Right lobe of liver (tissue), 6 donors: ENCODE measurements at regions of chr9 and their contacts with region 1.

Region 1: GRCh38 chr9:101530077-101530711 is 3.5 kb upstream of the RNF20 start:
- DNase-seq: peak in 2 of 3 donors; percentile 31 to 63
- ATAC-seq: peak; percentile 53 to 69 (median 62)
- H3K4me3 ChIP-seq: no peak overlapping the region
- H3K27ac ChIP-seq: no peak overlapping the region
- H3K4me1 ChIP-seq: peaks cover 0 to 7% (median 3%) of the 10 kb centered on the region in 4 donors
- H3K27me3 ChIP-seq: no peaks in the 10 kb centered on the region
- CTCF ChIP-seq: peak; percentile 79 to 92 (median 82)
- POLR2A ChIP-seq: no peak

Region 2: DNA sequence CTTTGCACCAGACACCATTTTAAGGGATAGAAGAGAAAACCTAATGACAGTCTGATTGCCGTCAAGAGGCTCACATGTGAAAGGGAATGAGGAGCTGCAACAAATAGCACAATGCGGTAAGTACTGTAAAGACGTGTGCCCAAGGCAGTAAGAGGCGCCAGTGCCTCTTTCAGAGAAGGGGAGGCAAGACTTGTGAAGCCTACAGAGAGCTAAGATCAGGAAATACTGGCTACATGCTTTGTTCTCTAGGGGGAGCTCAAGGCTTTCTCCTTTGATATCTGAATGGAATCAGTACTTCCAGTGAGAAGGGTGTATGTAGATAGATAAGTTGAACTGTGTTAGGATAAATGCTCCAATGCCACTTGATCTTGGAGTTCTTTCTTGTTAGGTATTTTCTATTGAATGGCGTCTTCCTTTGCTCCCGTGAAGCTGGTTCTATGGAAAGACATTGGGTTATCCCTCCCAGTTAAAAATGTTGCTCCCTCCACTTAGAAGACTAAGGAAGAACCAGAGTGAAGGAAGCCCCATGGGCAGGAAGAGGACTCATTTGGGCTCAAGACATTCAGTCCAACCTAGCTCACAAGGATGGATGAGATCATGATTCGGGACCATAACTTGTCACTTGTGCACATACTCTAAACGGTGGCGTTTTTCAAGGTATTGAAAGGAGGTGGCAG is 71.1 kb before region 1 on chr9:
- intact Hi-C with region 1: loop called (anchors 5 kb)
- DNase-seq: no peak
- ATAC-seq: peak; percentile 96 to 98 (median 96)
- H3K4me3 ChIP-seq: no peak overlapping the region
- H3K27ac ChIP-seq: no peak overlapping the region
- H3K4me1 ChIP-seq: no peaks in the 10 kb centered on the region
- H3K27me3 ChIP-seq: no peaks in the 10 kb centered on the region
- CTCF ChIP-seq: peak; percentile 74 to 82 (median 76)
- POLR2A ChIP-seq: no peak